ENCODE measurements at regions of chr1 and their contacts with region 1.

Region 1: GRCh38 chr1:109532365-109533136 is 7.1 kb upstream of the GPR61 start:
- DNase-seq: peak; percentile 91
- H3K4me3 ChIP-seq: peak overlapping the region in 3 of 4 donors; percentile 15 to 18 (median 17)
- H3K27ac ChIP-seq: peak overlapping the region; percentile 31 to 72 (median 52)
- H3K4me1 ChIP-seq: peaks cover 0 to 44% (median 34%) of the 10 kb centered on the region in 4 donors
- H3K27me3 ChIP-seq: no peaks in the 10 kb centered on the region
- CTCF ChIP-seq: peak; percentile 96 to 99 (median 98)
- EP300 ChIP-seq: no peak
- POLR2A ChIP-seq: no peak

Region 2: GRCh38 chr1:108345787-108346517 is 1186.6 kb before region 1 on chr1:
- intact Hi-C with region 1: no loop called
- DNase-seq: no peak
- H3K4me3 ChIP-seq: no peak overlapping the region
- H3K27ac ChIP-seq: no peak overlapping the region
- H3K4me1 ChIP-seq: no peaks in the 10 kb centered on the region
- H3K27me3 ChIP-seq: no peaks in the 10 kb centered on the region
- CTCF ChIP-seq: no peak
- EP300 ChIP-seq: no peak
- POLR2A ChIP-seq: no peak

Region 3: DNA sequence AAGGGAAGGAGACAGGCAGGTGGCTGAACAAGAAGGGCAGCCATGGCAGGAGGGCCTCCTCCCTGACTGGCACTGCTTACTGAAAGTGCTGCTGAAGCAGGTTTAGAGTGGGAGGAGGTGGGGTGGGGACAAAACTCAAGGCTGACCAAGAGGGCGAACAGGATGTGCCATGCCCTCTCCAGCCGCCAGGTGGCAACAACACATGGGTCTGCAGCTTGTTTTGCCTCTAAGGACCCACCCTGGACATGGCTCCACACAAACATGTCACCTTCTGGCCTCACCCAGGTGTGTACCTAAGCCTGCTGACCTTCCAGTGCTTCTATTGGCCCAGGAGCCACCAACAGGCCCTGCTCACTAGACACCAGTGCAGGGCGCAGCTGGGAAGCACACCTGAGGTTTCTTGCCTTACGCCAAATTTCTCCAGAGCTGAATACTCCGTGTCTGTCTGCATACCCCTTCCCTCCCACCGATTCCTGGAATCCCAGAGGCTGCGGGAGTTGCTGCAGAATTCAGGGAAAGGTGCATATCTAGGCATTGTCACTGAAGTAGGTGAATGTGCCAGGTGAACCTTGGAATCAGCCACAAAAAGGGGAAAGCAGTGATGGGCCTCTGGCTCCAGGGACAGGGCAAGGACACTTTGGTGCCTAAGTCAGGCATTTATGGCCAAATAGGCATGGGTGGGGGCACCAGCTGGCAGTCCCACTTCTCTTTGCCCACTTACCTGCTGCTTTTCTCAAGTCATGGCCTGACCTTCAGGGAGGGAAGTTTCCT is 254.9 kb before region 1 on chr1:
- intact Hi-C with region 1: loop called (anchors 10 kb)
- DNase-seq: peak; percentile 84
- H3K4me3 ChIP-seq: no peak overlapping the region
- H3K27ac ChIP-seq: peak overlapping the region in 1 of 4 donors; percentile 40
- H3K4me1 ChIP-seq: peaks cover 0 to 28% (median 17%) of the 10 kb centered on the region in 4 donors
- H3K27me3 ChIP-seq: no peaks in the 10 kb centered on the region
- CTCF ChIP-seq: peak; percentile 77 to 93 (median 89)
- EP300 ChIP-seq: no peak
- POLR2A ChIP-seq: no peak

Region 4: GRCh38 chr1:109426278-109427170 is 106.0 kb before region 1 on chr1 and contains the start of gene PSMA5:
- intact Hi-C with region 1: loop called (anchors 2 kb)
- DNase-seq: peak; percentile 99
- H3K4me3 ChIP-seq: peak within 1 kb of the TSS; percentile 60 to 99 (median 86)
- H3K27ac ChIP-seq: peak within 1 kb of the TSS; percentile 86 to 94 (median 92)
- H3K4me1 ChIP-seq: peaks cover 4 to 41% (median 26%) of the 10 kb centered on the region in 4 donors
- H3K27me3 ChIP-seq: no peaks in the 10 kb centered on the region
- CTCF ChIP-seq: no peak
- EP300 ChIP-seq: peak in 1 of 4 donors; percentile 16
- POLR2A ChIP-seq: peak; percentile 33 to 82
- total RNA-seq, gene PSMA5: 18.8 to 57.6 (median 25.8) TPM

Region 5: DNA sequence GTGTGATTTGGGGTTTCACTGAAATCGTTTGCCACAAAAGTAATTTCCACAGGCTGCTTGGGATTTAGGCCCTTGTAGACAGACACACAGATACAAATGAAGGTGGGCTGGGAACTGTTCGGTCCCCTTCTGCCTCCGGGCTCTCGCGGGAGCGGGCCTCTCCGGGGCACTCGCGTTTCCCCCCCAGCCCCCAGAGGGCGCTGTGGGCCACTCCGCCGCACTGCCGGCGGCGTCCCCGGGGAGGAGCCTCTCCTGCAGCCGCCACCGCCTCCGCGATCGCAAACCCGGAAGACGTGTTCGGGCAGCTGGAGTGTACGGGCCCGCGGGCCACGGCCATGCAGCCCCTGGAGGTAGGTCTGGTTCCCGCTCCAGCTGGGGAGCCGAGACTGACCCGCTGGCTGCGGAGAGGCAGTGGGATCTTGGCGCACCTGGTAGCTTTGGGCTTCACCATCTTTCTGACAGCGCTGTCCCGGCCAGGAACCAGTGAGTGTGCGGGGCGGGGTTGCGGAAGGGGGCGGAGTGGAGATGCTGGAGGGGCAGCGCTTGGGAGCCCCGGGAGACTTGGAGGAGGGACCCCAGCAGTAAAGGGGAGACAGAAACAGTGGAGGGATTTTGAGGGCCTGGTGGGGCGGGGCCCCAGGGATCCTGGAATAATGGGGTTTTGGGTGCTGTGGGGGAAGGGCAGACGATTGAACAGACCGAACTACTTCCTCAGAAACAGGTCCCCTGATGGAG is 38.6 kb before region 1 on chr1 and contains the start of gene CYB561D1:
- intact Hi-C with region 1: loop called (anchors 1 kb)
- DNase-seq: peak; percentile 92
- H3K4me3 ChIP-seq: peak within 1 kb of the TSS; percentile 79 to 94 (median 84)
- H3K27ac ChIP-seq: peak within 1 kb of the TSS; percentile 84 to 88 (median 86)
- H3K4me1 ChIP-seq: peaks cover 0 to 44% (median 29%) of the 10 kb centered on the region in 4 donors
- H3K27me3 ChIP-seq: no peaks in the 10 kb centered on the region
- CTCF ChIP-seq: peak; percentile 67 to 95 (median 75)
- EP300 ChIP-seq: no peak
- POLR2A ChIP-seq: peak in 1 of 2 donors; percentile 45
- total RNA-seq, gene CYB561D1: 4.2 to 7.6 (median 5.4) TPM

Measured in sigmoid colon (tissue), 7 donors.